Pancreas (tissue), 10 donors: ENCODE measurements at regions of chr2 and their contacts with region 1.

Region 1: GRCh38 chr2:42974721-42975717 is 182.6 kb upstream of the HAAO start:
- DNase-seq: peak; percentile 59 to 91 (median 79)
- ATAC-seq: peak; percentile 37 to 74 (median 54)
- H3K4me3 ChIP-seq: peak overlapping the region in 2 of 4 donors; percentile 11 to 32
- H3K27ac ChIP-seq: peak overlapping the region; percentile 26 to 81 (median 62)
- H3K4me1 ChIP-seq: peaks cover 25 to 39% (median 37%) of the 10 kb centered on the region in 3 donors
- H3K27me3 ChIP-seq: no peaks in the 10 kb centered on the region
- CTCF ChIP-seq: peak; percentile 75 to 84 (median 78)

Region 2: GRCh38 chr2:42256505-42256904 is 718.5 kb before region 1 on chr2:
- intact Hi-C with region 1: no loop called
- DNase-seq: no peak
- ATAC-seq: peak in 1 of 4 donors; percentile 20
- H3K4me3 ChIP-seq: no peak overlapping the region
- H3K27ac ChIP-seq: no peak overlapping the region
- H3K4me1 ChIP-seq: peaks cover 0 to 5% (median 0%) of the 10 kb centered on the region in 3 donors
- H3K27me3 ChIP-seq: no peaks in the 10 kb centered on the region
- CTCF ChIP-seq: no peak

Region 3: GRCh38 chr2:42652086-42652485 is 322.9 kb before region 1 on chr2:
- intact Hi-C with region 1: no loop called
- DNase-seq: no peak
- ATAC-seq: no peak
- H3K4me3 ChIP-seq: no peak overlapping the region
- H3K27ac ChIP-seq: no peak overlapping the region
- H3K4me1 ChIP-seq: no peaks in the 10 kb centered on the region
- H3K27me3 ChIP-seq: no peaks in the 10 kb centered on the region
- CTCF ChIP-seq: no peak

Region 4: DNA sequence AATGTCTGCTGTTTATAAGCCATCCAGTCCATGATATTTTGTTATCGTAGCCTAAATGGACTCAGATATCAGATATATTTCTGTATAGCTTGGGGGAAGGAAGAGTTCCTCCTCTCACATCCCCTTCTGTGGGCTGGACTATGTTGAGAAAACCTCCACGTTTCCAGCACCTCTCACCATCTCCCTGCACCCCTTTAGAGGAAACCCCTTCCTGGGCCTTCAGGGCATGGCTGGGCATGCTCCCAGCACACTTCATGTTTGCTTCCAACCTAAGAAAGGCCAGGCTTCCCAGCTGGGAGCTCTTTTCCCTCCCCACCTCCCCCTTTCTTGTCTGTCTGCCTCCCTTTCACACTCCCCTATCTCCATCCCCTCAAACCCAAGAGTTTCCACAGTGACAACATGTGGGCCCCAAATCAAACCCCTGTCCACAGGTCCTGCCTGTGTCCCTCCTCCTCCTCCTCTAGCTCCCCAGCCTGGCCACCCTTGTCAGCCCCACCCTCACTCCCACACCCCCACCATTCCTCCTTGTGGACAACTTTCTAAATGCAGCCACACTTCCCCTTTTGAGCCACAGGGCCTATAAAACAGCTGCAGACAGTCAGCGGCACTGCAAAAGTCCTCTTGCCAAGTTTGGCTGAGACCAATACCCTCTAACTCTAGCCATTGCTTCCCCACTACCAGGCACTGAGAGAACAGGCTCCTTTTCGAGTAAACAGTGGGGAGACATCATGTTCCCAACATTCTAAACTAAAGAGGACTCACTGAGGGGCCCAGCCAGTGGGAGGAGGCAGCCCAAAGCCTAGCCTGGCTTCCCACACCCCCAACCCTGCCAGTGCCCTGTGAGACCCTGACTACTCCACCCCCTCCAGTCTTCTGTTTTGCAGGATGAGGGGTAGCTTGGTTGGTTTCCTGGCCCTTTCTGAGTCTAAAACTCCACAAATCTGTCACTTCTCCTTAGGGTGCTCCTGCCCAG is 130.9 kb after region 1 on chr2:
- intact Hi-C with region 1: loop called in 1 of 3 experiments (anchors 5 kb)
- DNase-seq: no peak
- ATAC-seq: peak in 3 of 4 donors; percentile 21 to 47 (median 35)
- H3K4me3 ChIP-seq: no peak overlapping the region
- H3K27ac ChIP-seq: peak overlapping the region in 2 of 4 donors; percentile 19 to 41
- H3K4me1 ChIP-seq: peaks cover 0 to 9% (median 0%) of the 10 kb centered on the region in 3 donors
- H3K27me3 ChIP-seq: no peaks in the 10 kb centered on the region
- CTCF ChIP-seq: no peak

Region 5: GRCh38 chr2:43226558-43226954 is 251.5 kb after region 1 on chr2 and contains the start of gene ZFP36L2:
- intact Hi-C with region 1: loop called (anchors 5 kb)
- DNase-seq: peak; percentile 95 to 99 (median 98)
- ATAC-seq: peak; percentile 66 to 79 (median 74)
- H3K4me3 ChIP-seq: peak within 1 kb of the TSS; percentile 87 to 98 (median 92)
- H3K27ac ChIP-seq: peak within 1 kb of the TSS; percentile 86 to 98 (median 96)
- H3K4me1 ChIP-seq: peaks cover 21 to 24% (median 21%) of the 10 kb centered on the region in 3 donors
- H3K27me3 ChIP-seq: no peaks in the 10 kb centered on the region
- CTCF ChIP-seq: no peak
- total RNA-seq, gene ZFP36L2: 36.8 to 117 (median 64.8) TPM